Transverse colon (tissue), 4 donors: ENCODE measurements at regions of chr18 and their contacts with region 1.

Region 1: DNA sequence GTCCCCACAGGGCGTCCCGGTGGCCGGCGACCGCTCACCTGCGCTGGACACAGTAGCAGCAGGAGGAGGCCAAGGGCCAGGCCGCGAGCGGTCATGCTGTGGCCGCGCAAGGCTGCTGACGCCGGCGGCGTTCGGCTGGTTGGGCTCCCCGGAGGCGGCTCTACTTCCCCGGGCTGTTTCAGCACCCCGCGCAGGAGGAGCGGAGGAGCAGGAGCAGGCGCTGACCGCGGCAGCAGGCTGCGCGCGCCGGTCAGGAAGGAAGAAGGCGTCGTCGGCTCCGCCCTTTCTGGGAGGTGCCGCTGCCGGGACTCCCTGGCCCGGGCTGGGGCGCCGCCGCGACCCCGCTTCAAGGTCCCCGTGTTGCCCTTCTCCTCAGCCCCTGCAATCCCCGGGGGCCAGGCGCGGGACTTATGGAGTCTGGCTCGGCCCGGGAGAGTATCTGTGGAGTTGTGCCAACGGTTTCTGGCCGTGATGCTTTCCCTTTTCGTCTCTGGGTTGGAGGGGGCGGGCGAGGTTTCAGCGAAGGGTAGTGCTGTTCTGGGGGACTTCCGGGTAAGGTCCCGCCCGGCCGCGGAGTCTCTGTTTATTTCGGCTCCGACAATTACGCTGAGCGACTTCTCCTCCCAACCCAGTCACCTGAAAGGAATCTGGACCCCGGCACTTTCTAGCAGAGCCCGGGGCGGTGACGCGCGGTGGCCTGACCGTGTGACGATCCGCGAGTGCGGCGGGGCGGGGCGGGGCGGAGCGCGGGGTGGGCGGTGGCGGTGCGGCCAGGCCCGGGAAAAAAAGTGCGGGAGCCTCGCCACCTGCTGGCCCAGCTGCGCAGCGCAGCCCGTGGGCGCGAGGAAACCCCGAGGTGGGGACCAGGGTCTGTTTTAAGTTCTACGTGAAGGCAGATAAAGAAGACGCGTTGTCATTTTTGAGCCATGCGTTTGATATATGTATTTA is at the start of gene NPC1:
- DNase-seq: peak; percentile 95
- H3K4me3 ChIP-seq: peak within 1 kb of the TSS; percentile 68 to 87 (median 80)
- H3K27ac ChIP-seq: peak within 1 kb of the TSS; percentile 97 to 100 (median 98)
- H3K4me1 ChIP-seq: peaks cover 0 to 40% (median 19%) of the 10 kb centered on the region in 4 donors
- H3K27me3 ChIP-seq: no peaks in the 10 kb centered on the region
- CTCF ChIP-seq: peak; percentile 87 to 97 (median 94)
- EP300 ChIP-seq: peak; percentile 26
- POLR2A ChIP-seq: peak; percentile 97
- total RNA-seq, gene NPC1: 33.6 to 96.1 (median 49.7) TPM

Region 2: GRCh38 chr18:23503038-23503962 is 83.2 kb before region 1 on chr18 and contains the start of gene RMC1:
- in situ Hi-C with region 1: loop called in 1 of 4 experiments (anchors 5 kb)
- intact Hi-C with region 1: loop called (anchors 5 kb)
- DNase-seq: peak; percentile 98
- H3K4me3 ChIP-seq: peak within 1 kb of the TSS; percentile 85 to 99 (median 93)
- H3K27ac ChIP-seq: peak within 1 kb of the TSS; percentile 88 to 97 (median 93)
- H3K4me1 ChIP-seq: peaks cover 5 to 37% (median 22%) of the 10 kb centered on the region in 4 donors
- H3K27me3 ChIP-seq: no peaks in the 10 kb centered on the region
- CTCF ChIP-seq: peak in 1 of 5 experiments; percentile 29
- EP300 ChIP-seq: no peak
- POLR2A ChIP-seq: peak; percentile 95
- total RNA-seq, gene RMC1: 4.4 to 34.1 (median 26.6) TPM

Region 3: DNA sequence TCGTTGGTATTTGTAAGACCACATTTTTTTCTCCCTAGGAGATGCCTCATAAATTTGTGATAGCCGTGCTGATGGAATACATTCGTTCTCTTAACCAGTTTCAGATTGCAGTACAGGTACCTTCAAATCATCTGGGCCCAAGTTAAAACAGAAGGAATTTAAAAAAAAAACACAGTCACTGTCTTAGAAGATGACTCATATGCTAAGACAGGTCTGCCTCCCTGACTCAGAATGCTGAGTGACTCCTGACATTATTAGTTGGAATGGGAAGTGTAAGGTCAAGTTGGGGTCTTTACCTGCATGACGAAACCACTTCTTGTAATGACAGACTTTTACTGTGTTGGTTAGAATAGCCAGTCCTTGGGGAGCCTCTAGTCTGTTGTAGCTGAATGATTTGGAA is 56.9 kb before region 1 on chr18:
- in situ Hi-C with region 1: loop called in 1 of 4 experiments (anchors 10 kb)
- intact Hi-C with region 1: no loop called
- DNase-seq: no peak
- H3K4me3 ChIP-seq: no peak overlapping the region
- H3K27ac ChIP-seq: no peak overlapping the region
- H3K4me1 ChIP-seq: no peaks in the 10 kb centered on the region
- H3K27me3 ChIP-seq: no peaks in the 10 kb centered on the region
- CTCF ChIP-seq: no peak
- EP300 ChIP-seq: no peak
- POLR2A ChIP-seq: no peak